ENCODE measurements at regions of chr22 and their contacts with region 1.

Region 1: GRCh38 chr22:19730655-19731360 is 7.5 kb downstream of the GP1BB start:
- DNase-seq: peak; percentile 50
- ATAC-seq: peak; percentile 96
- H3K4me3 ChIP-seq: peak overlapping the region; percentile 20 to 45; a peak in 3 of 4 replicates
- H3K27ac ChIP-seq: no peak overlapping the region; the same call in 1 of the 2 replicates
- H3K4me1 ChIP-seq: peaks cover 0 to 12% of the 10 kb centered on the region in 2 experiments; a peak in 2 of 4 replicates
- H3K27me3 ChIP-seq: no peaks in the 10 kb centered on the region
- CTCF ChIP-seq: peak; percentile 89 to 93 (median 92)
- POLR2A ChIP-seq: no peak
- RAD21 ChIP-seq: peak; percentile 98

Region 2: GRCh38 chr22:19607192-19608002 is 123.4 kb before region 1 on chr22:
- CTCF ChIA-PET with region 1: no interaction called
- POLR2A ChIA-PET with region 1: no interaction called
- RAD21 ChIA-PET with region 1: no interaction called
- intact Hi-C with region 1: no loop called
- DNase-seq: no peak
- ATAC-seq: no peak
- H3K4me3 ChIP-seq: no peak overlapping the region
- H3K27ac ChIP-seq: no peak overlapping the region
- H3K4me1 ChIP-seq: no peaks in the 10 kb centered on the region
- H3K27me3 ChIP-seq: no peaks in the 10 kb centered on the region
- CTCF ChIP-seq: no peak
- POLR2A ChIP-seq: no peak
- RAD21 ChIP-seq: no peak

Region 3: DNA sequence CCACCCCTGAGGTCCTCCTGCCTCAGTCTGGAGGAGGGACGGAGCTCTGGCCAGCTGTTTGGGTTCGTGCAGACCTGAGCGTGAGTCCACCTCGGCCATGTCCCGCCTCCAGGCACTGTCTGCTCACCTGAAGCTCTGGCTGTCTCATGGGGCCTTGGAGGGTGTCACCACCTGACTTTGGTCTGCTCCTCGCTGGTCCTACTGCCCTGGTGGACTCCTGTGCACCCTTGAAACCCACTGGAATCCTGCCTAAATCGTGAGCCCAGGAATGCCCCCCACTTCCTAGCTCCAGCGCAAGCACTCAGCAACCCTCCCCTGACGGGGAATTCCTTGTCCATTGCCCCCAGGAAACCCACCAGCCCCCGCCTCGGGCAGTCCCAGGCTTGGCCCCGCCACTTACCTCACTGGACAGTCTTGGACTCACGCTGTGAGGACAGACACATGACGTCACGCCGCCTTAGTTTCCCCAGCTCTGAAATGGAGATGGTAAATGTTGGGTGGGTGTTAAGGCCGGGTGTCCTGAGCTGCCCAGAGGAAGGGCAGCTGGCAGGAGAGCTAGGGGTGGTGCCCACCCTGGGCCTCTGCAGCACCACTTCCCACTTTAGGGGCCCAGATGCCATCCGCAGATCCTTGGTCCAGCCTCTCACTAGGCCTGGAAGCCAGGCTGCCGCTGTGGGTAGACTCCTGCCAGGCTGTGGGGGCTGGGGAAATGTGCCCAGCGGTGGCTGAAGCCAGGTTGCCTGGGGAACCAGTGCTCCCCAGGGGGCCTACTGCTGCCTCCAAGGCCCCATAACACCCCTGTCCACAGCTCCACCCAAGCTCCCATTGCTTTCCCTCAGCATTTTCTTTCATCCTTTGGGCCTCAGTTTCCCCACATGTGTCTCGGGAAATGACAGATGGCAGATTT is 11.6 kb after region 1 on chr22:
- CTCF ChIA-PET with region 1: interaction called, 14 read pairs
- POLR2A ChIA-PET with region 1: no interaction called
- RAD21 ChIA-PET with region 1: no interaction called
- intact Hi-C with region 1: no loop called
- DNase-seq: no peak
- ATAC-seq: no peak
- H3K4me3 ChIP-seq: no peak overlapping the region
- H3K27ac ChIP-seq: no peak overlapping the region
- H3K4me1 ChIP-seq: no peaks in the 10 kb centered on the region
- H3K27me3 ChIP-seq: no peaks in the 10 kb centered on the region
- CTCF ChIP-seq: no peak
- POLR2A ChIP-seq: no peak
- RAD21 ChIP-seq: no peak

Region 4: GRCh38 chr22:19756288-19757128 is 25.7 kb after region 1 on chr22:
- CTCF ChIA-PET with region 1: interaction called, 14 read pairs
- POLR2A ChIA-PET with region 1: no interaction called
- RAD21 ChIA-PET with region 1: interaction called, 3 to 5 read pairs
- intact Hi-C with region 1: loop called (anchors 2 kb)
- DNase-seq: peak; percentile 34
- ATAC-seq: peak; percentile 88
- H3K4me3 ChIP-seq: peak overlapping the region; percentile 32 to 53
- H3K27ac ChIP-seq: peak overlapping the region; percentile 14; the same call in 1 of the 2 replicates
- H3K4me1 ChIP-seq: peaks cover 4 to 16% of the 10 kb centered on the region in 2 experiments; a peak in 3 of 4 replicates
- H3K27me3 ChIP-seq: no peaks in the 10 kb centered on the region
- CTCF ChIP-seq: peak; percentile 68 to 78 (median 74)
- POLR2A ChIP-seq: no peak
- RAD21 ChIP-seq: peak; percentile 83

Region 5: GRCh38 chr22:19806213-19807145 is 75.7 kb after region 1 on chr22:
- CTCF ChIA-PET with region 1: interaction called, 4 read pairs
- POLR2A ChIA-PET with region 1: no interaction called
- RAD21 ChIA-PET with region 1: interaction called in 1 of 2 experiments, 13 read pairs
- intact Hi-C with region 1: no loop called
- DNase-seq: peak; percentile 38
- ATAC-seq: peak; percentile 95
- H3K4me3 ChIP-seq: peak overlapping the region; percentile 9 to 28; a peak in 3 of 4 replicates
- H3K27ac ChIP-seq: peak overlapping the region; percentile 57
- H3K4me1 ChIP-seq: peaks cover 16 to 20% of the 10 kb centered on the region in 2 experiments
- H3K27me3 ChIP-seq: no peaks in the 10 kb centered on the region
- CTCF ChIP-seq: no peak
- POLR2A ChIP-seq: no peak
- RAD21 ChIP-seq: no peak

Region 6: GRCh38 chr22:19909350-19910179 is 178.8 kb after region 1 on chr22:
- CTCF ChIA-PET with region 1: interaction called, 123 read pairs
- POLR2A ChIA-PET with region 1: interaction called, 8 read pairs
- RAD21 ChIA-PET with region 1: interaction called, 26 to 43 read pairs
- intact Hi-C with region 1: loop called (anchors 1 kb)
- DNase-seq: peak; percentile 51
- ATAC-seq: peak; percentile 98
- H3K4me3 ChIP-seq: no peak overlapping the region
- H3K27ac ChIP-seq: peak overlapping the region; percentile 33; the same call in 1 of the 2 replicates
- H3K4me1 ChIP-seq: no peaks in the 10 kb centered on the region
- H3K27me3 ChIP-seq: no peaks in the 10 kb centered on the region
- CTCF ChIP-seq: peak; percentile 88 to 94 (median 91)
- POLR2A ChIP-seq: no peak
- RAD21 ChIP-seq: peak; percentile 95

Region 7: DNA sequence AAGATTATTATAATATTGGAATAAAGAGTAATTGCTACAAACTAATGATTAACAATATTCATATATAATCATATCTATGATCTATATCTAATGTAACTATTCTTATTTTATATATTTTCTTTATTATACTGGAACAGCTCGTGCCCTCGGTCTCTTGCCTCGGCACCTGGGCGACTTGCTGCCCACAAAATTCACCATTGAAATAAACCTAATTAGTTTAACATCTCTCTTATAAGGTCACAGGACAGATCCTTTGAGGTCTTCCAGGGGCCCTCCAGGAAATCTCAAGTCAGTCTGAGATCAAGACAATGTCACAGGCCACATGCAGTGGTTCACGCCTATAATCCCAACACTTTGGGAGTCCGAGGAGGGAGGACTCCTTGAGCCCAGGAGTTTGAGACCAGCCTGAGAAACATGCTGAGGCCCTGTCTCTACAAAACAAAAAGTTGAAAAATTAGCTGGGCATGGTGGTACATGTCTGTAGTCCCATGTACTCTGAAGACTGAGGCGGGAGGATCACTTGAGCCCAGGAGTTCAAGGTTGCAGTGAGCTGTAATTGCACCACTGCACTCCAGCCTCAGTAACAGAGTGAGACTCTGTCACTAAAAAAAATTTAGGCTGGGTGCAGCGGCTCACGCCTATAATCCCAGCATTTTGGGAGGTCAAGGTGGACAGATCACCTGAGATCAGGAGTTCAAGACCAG is 217.4 kb after region 1 on chr22:
- CTCF ChIA-PET with region 1: interaction called, 18 read pairs
- POLR2A ChIA-PET with region 1: no interaction called
- RAD21 ChIA-PET with region 1: interaction called, 9 to 10 read pairs
- intact Hi-C with region 1: no loop called
- DNase-seq: no peak
- ATAC-seq: no peak
- H3K4me3 ChIP-seq: no peak overlapping the region
- H3K27ac ChIP-seq: no peak overlapping the region
- H3K4me1 ChIP-seq: peaks cover 10 to 18% of the 10 kb centered on the region in 2 experiments
- H3K27me3 ChIP-seq: no peaks in the 10 kb centered on the region
- CTCF ChIP-seq: no peak
- POLR2A ChIP-seq: no peak
- RAD21 ChIP-seq: no peak

Region 8: GRCh38 chr22:19962233-19962908 is 231.6 kb after region 1 on chr22:
- CTCF ChIA-PET with region 1: interaction called, 5 read pairs
- POLR2A ChIA-PET with region 1: no interaction called
- RAD21 ChIA-PET with region 1: interaction called in 1 of 2 experiments, 5 read pairs
- intact Hi-C with region 1: loop called (anchors 2 kb)
- DNase-seq: peak; percentile 79
- ATAC-seq: peak; percentile 79
- H3K4me3 ChIP-seq: peak overlapping the region; percentile 46 to 64
- H3K27ac ChIP-seq: peak overlapping the region; percentile 99
- H3K4me1 ChIP-seq: peaks cover 44 to 60% of the 10 kb centered on the region in 2 experiments
- H3K27me3 ChIP-seq: no peaks in the 10 kb centered on the region
- CTCF ChIP-seq: peak; percentile 77 to 88 (median 78)
- POLR2A ChIP-seq: no peak
- RAD21 ChIP-seq: peak; percentile 67

Measured in HCT116 (cell line).